ENCODE measurements at regions of chr1 and their contacts with region 1.

Region 1: DNA sequence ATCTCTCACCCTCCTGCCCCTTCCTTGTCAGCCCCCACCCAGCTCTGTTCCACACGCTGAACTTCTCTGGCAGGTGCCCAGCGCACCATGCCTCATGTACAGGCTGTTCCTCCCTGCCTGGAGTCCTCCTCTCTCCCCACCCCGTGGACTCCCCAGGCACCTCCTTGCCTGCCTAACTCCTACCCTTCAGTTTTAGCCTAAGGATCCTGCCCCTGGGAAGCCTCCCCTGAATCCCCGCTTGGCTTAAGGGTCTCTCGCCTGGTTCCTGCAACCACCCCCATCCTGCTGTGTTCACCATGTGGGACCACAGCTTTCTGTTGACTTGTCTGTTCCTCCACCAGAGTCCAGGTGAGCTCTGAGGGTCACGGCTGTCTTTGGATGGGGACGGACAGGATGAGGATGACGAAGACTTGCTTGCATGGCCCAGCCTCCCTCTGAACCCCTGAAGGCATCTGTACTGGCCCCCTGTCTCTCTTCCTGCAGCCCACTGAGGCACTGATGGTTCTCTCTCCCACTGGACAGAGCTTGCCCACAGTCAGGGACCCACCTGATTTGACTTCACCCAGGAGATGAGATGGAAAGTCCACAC is 153.2 kb upstream of the C1orf174 start:
- DNase-seq: peak in 1 of 2 donors; percentile 79
- H3K4me3 ChIP-seq: no peak overlapping the region
- CTCF ChIP-seq: no peak
- POLR2A ChIP-seq: no peak

Region 2: DNA sequence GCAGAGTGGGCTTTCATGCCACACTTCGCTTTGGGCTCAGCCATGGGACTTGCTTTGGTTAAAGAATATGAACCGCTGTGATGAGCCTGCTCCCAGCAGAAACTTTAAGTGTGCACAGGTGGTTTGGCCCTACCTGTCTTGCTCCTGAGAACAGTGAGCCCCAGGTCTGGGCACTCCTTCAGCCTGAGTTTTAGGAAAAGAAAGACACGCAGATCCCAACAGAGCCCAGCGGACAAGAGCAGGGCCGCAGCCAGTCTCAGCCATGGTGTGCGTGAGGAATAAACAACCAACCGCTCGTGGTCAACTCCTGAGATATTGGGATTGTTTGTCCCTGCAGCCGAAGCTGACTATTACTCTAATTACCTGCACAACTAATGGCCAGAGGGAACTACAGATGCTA is 63.9 kb after region 1 on chr1:
- intact Hi-C with region 1: loop called (anchors 2 kb)
- DNase-seq: peak in 1 of 2 donors; percentile 39
- H3K4me3 ChIP-seq: no peak overlapping the region
- CTCF ChIP-seq: no peak
- POLR2A ChIP-seq: no peak

Measured in lower leg skin (tissue), 4 donors.